ENCODE measurements at regions of chr6 and their contacts with region 1.

Region 1: GRCh38 chr6:1596088-1596852 is 13.4 kb upstream of the FOXC1 start:
- DNase-seq: no peak
- H3K4me3 ChIP-seq: peak overlapping the region; percentile 36
- H3K27me3 ChIP-seq: peaks cover 4% of the 10 kb centered on the region; the same call in 1 of the 2 replicates
- CTCF ChIP-seq: peak; percentile 93

Region 2: GRCh38 chr6:1581120-1581991 is 14.9 kb before region 1 on chr6:
- CTCF ChIA-PET with region 1: interaction called, 13 read pairs
- POLR2A ChIA-PET with region 1: no interaction called
- DNase-seq: no peak
- H3K4me3 ChIP-seq: no peak overlapping the region
- H3K27me3 ChIP-seq: no peaks in the 10 kb centered on the region
- CTCF ChIP-seq: no peak

Region 3: DNA sequence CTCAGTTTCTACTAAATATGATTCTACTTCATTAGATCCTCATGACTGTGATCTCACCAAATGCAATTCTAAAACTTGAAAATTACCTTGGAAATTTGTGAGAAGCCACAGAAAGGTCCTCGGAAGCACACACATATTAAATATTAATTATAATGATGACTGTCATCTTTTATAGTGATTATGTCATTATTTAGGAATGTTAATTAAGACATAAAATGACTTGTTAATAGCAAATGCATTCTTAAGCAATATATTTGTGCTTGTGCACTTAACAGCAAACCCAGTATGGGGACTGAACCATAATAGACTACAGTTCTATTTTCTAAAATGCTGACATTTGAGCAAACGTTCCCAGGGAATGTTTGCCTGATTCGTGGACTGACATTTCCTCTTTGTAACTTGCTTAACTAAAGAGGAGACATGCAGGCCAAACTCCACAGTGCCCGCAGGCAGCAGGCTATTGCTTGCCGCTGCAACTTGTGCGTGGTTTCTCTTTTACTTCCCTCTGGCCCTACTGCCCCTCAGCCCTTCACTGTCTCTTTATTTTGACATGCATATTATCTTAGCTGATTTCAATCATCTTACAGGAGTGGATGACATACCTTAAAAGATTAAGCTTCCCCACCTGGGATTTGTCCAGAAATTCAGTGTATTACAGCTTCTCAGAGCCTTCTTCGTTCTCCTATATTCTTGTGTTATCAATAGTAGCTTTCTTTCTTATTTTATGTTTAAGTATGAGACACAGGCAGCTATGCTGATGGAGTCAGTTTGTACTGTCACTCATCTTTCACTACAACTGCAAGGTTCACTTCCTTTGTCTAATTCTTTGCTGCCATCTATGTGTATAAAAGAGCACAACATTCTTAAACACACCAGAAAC is 507.6 kb after region 1 on chr6:
- CTCF ChIA-PET with region 1: interaction called, 20 read pairs
- POLR2A ChIA-PET with region 1: no interaction called
- DNase-seq: peak; percentile 3
- H3K4me3 ChIP-seq: no peak overlapping the region
- H3K27me3 ChIP-seq: no peaks in the 10 kb centered on the region
- CTCF ChIP-seq: peak; percentile 62

Region 4: GRCh38 chr6:2634139-2634964 is 1038.1 kb after region 1 on chr6:
- CTCF ChIA-PET with region 1: interaction called, 71 read pairs
- POLR2A ChIA-PET with region 1: no interaction called
- DNase-seq: peak; percentile 31
- H3K4me3 ChIP-seq: peak overlapping the region; percentile 40
- H3K27me3 ChIP-seq: no peaks in the 10 kb centered on the region; the same call in 1 of the 2 replicates
- CTCF ChIP-seq: peak; percentile 99

Region 5: DNA sequence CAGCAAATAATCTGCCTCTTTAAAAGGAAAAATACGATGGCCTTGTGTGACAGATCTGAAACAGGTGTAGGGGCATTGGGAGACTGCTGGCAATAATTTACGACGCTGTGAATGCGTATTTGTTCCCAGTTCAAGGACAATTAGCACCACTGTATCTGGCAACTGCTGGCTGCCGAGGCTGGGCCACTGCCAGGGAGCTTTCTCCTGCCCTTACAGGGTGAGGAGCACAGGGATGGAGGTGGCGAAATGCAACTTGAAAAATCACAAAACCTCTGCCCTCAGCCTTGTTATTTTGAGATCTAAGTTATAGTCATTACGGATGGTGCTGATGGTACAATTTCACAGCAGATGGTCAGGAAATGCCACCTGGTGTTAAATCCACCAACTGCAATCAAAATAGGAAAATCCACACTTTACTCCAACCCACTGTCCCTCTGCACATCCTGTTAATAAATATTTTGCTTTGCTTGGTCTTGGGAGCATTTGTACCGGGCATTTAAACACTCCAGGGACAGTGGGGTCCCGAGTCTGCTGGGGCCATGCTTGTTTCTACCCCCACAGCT is 1148.0 kb after region 1 on chr6:
- CTCF ChIA-PET with region 1: interaction called, 92 read pairs
- POLR2A ChIA-PET with region 1: no interaction called
- DNase-seq: no peak
- H3K4me3 ChIP-seq: no peak overlapping the region
- H3K27me3 ChIP-seq: no peaks in the 10 kb centered on the region
- CTCF ChIP-seq: peak; percentile 37

Measured in BJ (cell line).